Dendritic cell treated with granulocyte-macrophage colony-stimulating factor and Interleukin-4, amounts not matched to agents 40 ng/mL and 50 ng/mL, for 4 days (primary cell): ENCODE measurements at regions of chr11 and their contacts with region 1.

Region 1: GRCh38 chr11:118216621-118217481 is 8.0 kb downstream of the JAML start:
- H3K4me3 Mint-ChIP-seq: peak overlapping the region; percentile 75
- H3K27ac Mint-ChIP-seq: peak overlapping the region; percentile 91
- H3K4me1 Mint-ChIP-seq: peaks cover 97% of the 10 kb centered on the region
- H3K27me3 Mint-ChIP-seq: no peaks in the 10 kb centered on the region

Region 2: GRCh38 chr11:117907251-117907981 is 309.4 kb before region 1 on chr11:
- intact Hi-C with region 1: no loop called
- H3K4me3 Mint-ChIP-seq: peak overlapping the region; percentile 69
- H3K27ac Mint-ChIP-seq: peak overlapping the region; percentile 88
- H3K4me1 Mint-ChIP-seq: peaks cover 42% of the 10 kb centered on the region
- H3K27me3 Mint-ChIP-seq: peaks cover 2% of the 10 kb centered on the region

Region 3: DNA sequence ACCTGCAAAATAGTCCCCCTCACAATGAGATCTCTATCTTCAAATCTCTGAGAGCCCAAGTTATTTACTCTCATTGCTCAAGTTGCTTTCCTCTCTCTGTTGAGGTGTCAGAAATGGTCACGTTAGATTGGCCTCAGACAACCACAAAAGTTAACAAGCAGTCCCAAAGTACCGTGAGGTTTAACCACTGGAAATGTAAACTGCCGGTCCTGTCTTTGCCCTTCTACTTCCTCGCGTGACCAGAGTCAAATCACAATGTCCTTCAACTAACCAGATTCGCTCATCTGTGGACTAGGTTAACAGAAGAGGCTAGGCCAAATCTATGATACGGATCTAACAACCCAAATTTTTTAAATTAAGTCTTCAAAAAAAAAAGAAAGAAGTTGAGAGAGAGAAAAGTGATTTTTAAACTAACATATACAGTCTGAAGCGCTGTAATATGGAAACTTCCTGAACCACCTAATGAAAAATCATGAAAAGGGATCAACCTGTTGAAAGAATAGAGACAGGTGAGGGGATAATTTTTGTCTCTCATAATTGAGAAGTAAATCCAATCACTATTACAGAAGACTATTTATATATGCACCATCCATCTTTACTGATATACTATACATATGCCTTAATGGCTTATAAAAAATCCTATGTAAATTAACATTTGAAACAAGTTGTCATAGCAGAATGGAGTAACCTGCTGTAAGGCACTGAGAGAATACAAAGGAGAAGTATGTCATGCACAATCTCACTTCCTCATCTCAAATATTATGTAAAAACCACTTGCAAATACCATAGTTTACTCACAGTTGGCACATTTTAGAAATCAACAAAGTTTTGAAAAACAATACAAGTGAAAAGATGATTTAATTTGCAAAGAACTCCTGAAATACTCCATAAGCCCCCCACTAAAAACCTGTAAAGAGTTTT is 11.3 kb after region 1 on chr11:
- intact Hi-C with region 1: loop called (anchors 2 kb)
- H3K4me3 Mint-ChIP-seq: no peak overlapping the region
- H3K27ac Mint-ChIP-seq: peak overlapping the region; percentile 83
- H3K4me1 Mint-ChIP-seq: peaks cover 58% of the 10 kb centered on the region
- H3K27me3 Mint-ChIP-seq: no peaks in the 10 kb centered on the region

Region 4: DNA sequence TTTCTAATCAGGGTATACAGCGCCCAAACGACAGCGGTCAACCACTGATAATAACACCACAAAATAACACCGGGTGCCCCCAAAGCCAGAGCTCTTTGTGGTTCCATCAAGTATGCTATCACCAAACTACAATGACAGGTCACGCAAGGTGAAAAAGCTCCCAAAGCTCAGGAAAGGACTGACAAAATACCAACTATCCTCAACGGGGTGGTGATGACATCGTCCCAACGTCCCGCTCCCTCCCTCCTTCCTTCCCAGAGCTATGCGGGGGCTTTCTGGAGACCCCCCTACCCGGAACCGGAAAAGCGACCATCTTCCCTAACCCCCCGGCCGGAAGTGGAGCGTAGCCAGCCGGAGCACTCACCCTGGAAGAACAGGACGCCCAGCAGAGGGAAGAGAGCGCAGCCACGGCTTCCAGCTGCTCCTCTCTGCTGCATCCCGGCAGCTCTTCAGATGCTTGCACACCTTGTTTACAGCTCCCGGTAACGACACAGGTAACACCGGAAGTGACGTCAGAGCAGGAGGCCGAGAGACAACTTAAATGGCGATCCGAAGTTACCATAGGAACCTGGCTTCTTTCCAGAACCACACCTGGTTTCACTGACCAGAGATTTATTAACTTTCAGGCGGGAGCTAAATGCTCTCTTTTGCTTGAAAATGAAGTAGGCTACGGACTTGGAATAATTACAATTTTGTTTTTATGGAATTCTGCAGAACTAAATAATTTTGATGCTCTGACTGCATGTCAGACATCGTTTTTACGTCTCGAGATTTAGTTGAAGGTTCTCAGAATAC is 35.2 kb after region 1 on chr11 and contains the start of gene MPZL3:
- intact Hi-C with region 1: loop called (anchors 5 kb)
- H3K4me3 Mint-ChIP-seq: peak within 1 kb of the TSS; percentile 96
- H3K27ac Mint-ChIP-seq: peak within 1 kb of the TSS; percentile 96
- H3K4me1 Mint-ChIP-seq: peaks cover 21% of the 10 kb centered on the region
- H3K27me3 Mint-ChIP-seq: no peaks in the 10 kb centered on the region